ENCODE measurements at regions of chr6 and their contacts with region 1.

Region 1: GRCh38 chr6:16964553-16965501 is 137.0 kb upstream of the STMND1 start:
- DNase-seq: peak; percentile 77 to 82
- H3K4me3 ChIP-seq: 0 out of 2 replicates have a peak overlapping the region, but pooled peaks have one; percentile 22
- H3K27ac ChIP-seq: no peak overlapping the region
- H3K4me1 ChIP-seq: peaks cover 13% of the 10 kb centered on the region
- H3K27me3 ChIP-seq: no peaks in the 10 kb centered on the region
- CTCF ChIP-seq: peak; percentile 92

Region 2: DNA sequence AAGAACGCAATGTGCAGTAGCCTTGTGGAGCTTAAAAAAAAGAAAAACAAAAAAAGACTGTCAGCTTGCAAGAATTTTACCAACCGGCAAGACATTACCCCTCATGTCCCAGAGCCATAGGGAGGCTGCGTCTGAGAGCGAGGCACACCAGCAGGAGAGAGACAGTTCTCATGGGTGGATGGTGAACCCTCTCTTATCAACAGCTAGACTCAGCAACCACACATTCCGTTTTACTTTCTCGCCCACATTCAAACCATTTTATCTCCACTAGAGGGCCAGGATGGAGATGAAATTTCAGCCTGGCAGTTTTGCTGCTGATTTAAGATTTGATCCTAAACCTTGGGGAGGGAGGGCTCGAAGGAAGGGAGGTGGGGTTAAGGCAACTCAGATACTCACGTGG is 450.6 kb before region 1 on chr6:
- CTCF ChIA-PET with region 1: no interaction called
- POLR2A ChIA-PET with region 1: no interaction called
- intact Hi-C with region 1: loop called (anchors 10 kb)
- DNase-seq: no peak
- H3K4me3 ChIP-seq: no peak overlapping the region
- H3K27ac ChIP-seq: no peak overlapping the region
- H3K4me1 ChIP-seq: no peaks in the 10 kb centered on the region
- H3K27me3 ChIP-seq: no peaks in the 10 kb centered on the region
- CTCF ChIP-seq: peak; percentile 53

Region 3: GRCh38 chr6:16849280-16849987 is 115.4 kb before region 1 on chr6:
- CTCF ChIA-PET with region 1: interaction called, 11 read pairs
- POLR2A ChIA-PET with region 1: no interaction called
- intact Hi-C with region 1: no loop called
- DNase-seq: peak; percentile 48 to 92
- H3K4me3 ChIP-seq: peak overlapping the region; percentile 43; the same call in 1 of the 2 replicates
- H3K27ac ChIP-seq: peak overlapping the region; percentile 91
- H3K4me1 ChIP-seq: peaks cover 56% of the 10 kb centered on the region
- H3K27me3 ChIP-seq: no peaks in the 10 kb centered on the region
- CTCF ChIP-seq: no peak